PC-9 (cell line): ENCODE measurements at regions of chr18 and their contacts with region 1.

Region 1: GRCh38 chr18:11040823-11041656 is 108.3 kb downstream of the PIEZO2 start:
- DNase-seq: peak in 1 of 2 experiments; percentile 8
- H3K4me3 ChIP-seq: no peak overlapping the region
- H3K27ac ChIP-seq: no peak overlapping the region
- H3K4me1 ChIP-seq: no peaks in the 10 kb centered on the region
- H3K27me3 ChIP-seq: peaks cover 25% of the 10 kb centered on the region
- CTCF ChIP-seq: peak; percentile 70

Region 2: GRCh38 chr18:9971313-9971920 is 1069.6 kb before region 1 on chr18:
- CTCF ChIA-PET with region 1: no interaction called
- POLR2A ChIA-PET with region 1: no interaction called
- intact Hi-C with region 1: loop called (anchors 5 kb)
- DNase-seq: peak; percentile 65 to 68
- H3K4me3 ChIP-seq: no peak overlapping the region
- H3K27ac ChIP-seq: no peak overlapping the region
- H3K4me1 ChIP-seq: no peaks in the 10 kb centered on the region
- H3K27me3 ChIP-seq: no peaks in the 10 kb centered on the region
- CTCF ChIP-seq: peak; percentile 94

Region 3: GRCh38 chr18:10591896-10592295 is 449.1 kb before region 1 on chr18:
- CTCF ChIA-PET with region 1: no interaction called
- POLR2A ChIA-PET with region 1: no interaction called
- intact Hi-C with region 1: no loop called
- DNase-seq: no peak
- H3K4me3 ChIP-seq: no peak overlapping the region
- H3K27ac ChIP-seq: no peak overlapping the region
- H3K4me1 ChIP-seq: no peaks in the 10 kb centered on the region
- H3K27me3 ChIP-seq: peaks cover 15% of the 10 kb centered on the region
- CTCF ChIP-seq: no peak

Region 4: DNA sequence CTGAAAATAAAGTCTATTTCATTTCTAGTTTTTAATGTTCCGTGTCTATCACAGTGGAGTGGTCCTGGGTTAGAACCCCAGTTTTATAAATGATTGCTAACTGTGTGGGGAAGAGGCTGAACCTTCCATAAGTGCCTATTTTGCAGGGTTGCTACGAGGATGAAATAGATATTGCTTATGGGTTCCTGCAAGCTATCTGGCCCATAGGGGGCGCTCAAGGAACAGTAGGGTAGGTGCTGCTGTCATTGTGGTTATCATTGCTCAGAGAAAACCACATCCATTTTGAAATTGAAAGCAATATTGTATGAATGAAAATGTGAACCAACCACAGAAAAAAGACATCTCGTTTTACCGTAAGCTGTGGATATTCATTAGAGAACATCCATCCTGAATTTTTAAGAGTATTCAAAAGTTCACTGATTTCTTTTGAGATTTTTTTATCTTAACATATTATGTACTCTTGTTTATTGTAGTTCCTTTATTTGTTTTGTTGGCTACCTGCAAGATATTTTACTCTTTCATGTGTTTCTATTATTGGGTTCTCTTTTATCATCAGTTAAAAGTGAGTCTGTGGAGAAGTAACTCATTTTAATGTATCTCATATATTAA is 253.6 kb before region 1 on chr18:
- CTCF ChIA-PET with region 1: no interaction called
- POLR2A ChIA-PET with region 1: no interaction called
- intact Hi-C with region 1: loop called (anchors 5 kb)
- DNase-seq: peak in 1 of 2 experiments; percentile 47
- H3K4me3 ChIP-seq: no peak overlapping the region
- H3K27ac ChIP-seq: no peak overlapping the region
- H3K4me1 ChIP-seq: no peaks in the 10 kb centered on the region
- H3K27me3 ChIP-seq: peaks cover 33% of the 10 kb centered on the region
- CTCF ChIP-seq: peak; percentile 79

Region 5: DNA sequence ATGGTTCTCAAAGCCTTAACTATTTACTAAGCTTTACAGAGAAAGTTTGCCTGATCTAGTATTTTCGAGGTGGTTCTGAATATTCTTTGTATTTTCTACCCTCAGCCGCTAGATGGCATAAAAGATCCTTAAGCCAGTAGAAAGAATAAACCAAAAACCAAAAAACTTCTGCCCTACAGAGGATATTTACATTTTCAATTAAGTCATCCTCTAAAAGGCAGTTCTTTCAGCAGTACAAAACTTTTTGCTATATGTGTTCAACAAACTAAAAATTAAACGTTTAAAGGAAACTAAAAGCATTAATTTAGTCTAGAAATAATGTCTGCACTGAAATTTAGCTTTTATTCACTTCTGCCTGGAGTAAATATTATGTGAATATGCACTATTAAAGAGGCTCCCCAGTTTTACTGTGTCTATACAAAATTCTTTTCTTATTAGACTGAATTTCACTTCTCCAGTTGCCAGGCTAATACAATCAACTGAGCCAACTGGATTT is 189.2 kb before region 1 on chr18:
- CTCF ChIA-PET with region 1: no interaction called
- POLR2A ChIA-PET with region 1: no interaction called
- intact Hi-C with region 1: loop called (anchors 2 kb)
- DNase-seq: no peak
- H3K4me3 ChIP-seq: no peak overlapping the region
- H3K27ac ChIP-seq: no peak overlapping the region
- H3K4me1 ChIP-seq: no peaks in the 10 kb centered on the region
- H3K27me3 ChIP-seq: peaks cover 31% of the 10 kb centered on the region
- CTCF ChIP-seq: peak; percentile 84

Region 6: DNA sequence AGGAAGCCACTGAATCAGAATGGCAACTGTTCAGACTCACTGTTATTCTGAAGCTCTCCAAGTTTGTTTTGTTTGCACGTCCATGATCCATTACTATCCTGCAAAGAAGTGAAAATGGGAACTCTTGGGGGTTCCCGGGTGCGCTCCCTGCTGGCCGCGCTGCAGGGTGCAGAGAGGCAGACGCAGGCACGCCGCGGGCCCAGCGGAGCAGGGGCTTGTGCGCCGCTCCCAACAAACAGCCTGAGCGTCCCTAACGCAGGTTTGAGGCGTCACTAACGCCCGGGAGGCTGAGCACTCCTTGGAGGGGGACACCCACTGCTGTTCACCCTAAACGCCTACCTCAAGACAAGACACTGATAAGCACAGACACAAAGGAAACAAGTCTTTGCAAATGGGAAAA is 122.6 kb after region 1 on chr18:
- CTCF ChIA-PET with region 1: no interaction called
- POLR2A ChIA-PET with region 1: no interaction called
- intact Hi-C with region 1: no loop called
- DNase-seq: no peak
- H3K4me3 ChIP-seq: no peak overlapping the region
- H3K27ac ChIP-seq: no peak overlapping the region
- H3K4me1 ChIP-seq: no peaks in the 10 kb centered on the region
- H3K27me3 ChIP-seq: peaks cover 42% of the 10 kb centered on the region
- CTCF ChIP-seq: no peak

Region 7: GRCh38 chr18:11199477-11199876 is 158.4 kb after region 1 on chr18:
- CTCF ChIA-PET with region 1: no interaction called
- POLR2A ChIA-PET with region 1: no interaction called
- intact Hi-C with region 1: no loop called
- DNase-seq: no peak
- H3K4me3 ChIP-seq: no peak overlapping the region
- H3K27ac ChIP-seq: no peak overlapping the region
- H3K4me1 ChIP-seq: no peaks in the 10 kb centered on the region
- H3K27me3 ChIP-seq: peaks cover 60% of the 10 kb centered on the region
- CTCF ChIP-seq: no peak